Activated B cell treated with CpG ODN at 0.5 μM for 24 hours (primary cell): ENCODE measurements at regions of chr5 and their contacts with region 1.

Region 1: DNA sequence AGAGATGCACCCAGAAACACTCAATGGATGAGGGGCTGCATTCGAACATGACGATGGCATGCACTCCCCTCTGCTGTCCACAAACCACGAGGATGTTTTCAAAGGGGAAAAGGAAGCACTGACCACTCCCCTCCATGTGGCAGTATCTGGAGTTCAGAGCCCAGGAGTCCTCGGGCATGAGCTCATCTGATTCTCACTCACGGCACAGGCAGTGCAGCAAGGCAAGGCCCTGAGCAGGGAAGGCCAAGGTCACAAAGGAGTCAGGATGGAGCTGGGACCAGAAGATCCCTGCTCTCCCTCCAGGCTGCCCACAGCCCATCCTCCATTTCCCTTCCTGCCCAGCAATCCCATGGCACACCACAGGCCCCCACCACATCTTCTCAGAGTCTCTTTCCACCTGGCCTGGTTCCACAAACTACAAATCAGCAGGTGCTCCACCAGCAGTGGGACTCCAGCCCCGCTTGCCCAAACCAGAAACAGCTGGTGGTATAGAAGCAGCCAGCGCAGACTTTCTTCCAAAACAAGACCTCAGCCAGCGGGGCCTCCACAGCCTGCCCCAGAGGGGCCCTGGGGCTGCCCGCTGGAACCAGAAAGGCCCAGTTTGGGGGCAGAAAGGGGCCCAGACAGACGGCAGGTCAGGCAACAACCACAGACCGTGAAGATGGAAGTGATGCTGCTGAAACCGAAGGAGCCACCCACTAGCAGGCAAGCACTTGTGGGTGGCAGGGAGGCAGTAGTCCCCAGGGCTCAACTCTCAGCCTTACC is 12.2 kb downstream of the TNIP1 start:
- DNase-seq: peak; percentile 62
- ATAC-seq: peak; percentile 86
- H3K4me3 Mint-ChIP-seq: peak overlapping the region; percentile 72
- H3K27ac Mint-ChIP-seq: peak overlapping the region; percentile 91
- H3K4me1 Mint-ChIP-seq: peaks cover 99% of the 10 kb centered on the region
- H3K27me3 Mint-ChIP-seq: no peaks in the 10 kb centered on the region
- CTCF ChIP-seq: no peak

Region 2: GRCh38 chr5:150778517-150779396 is 289.9 kb before region 1 on chr5 and contains the start of gene SMIM3:
- CTCF ChIA-PET with region 1: no interaction called
- POLR2A ChIA-PET with region 1: no interaction called
- intact Hi-C with region 1: no loop called
- DNase-seq: no peak
- ATAC-seq: peak; percentile 27
- H3K4me3 Mint-ChIP-seq: peak within 1 kb of the TSS; percentile 79
- H3K27ac Mint-ChIP-seq: no peak within 1 kb of the TSS
- H3K4me1 Mint-ChIP-seq: peaks cover 33% of the 10 kb centered on the region
- H3K27me3 Mint-ChIP-seq: peaks cover 43% of the 10 kb centered on the region
- CTCF ChIP-seq: no peak
- total RNA-seq, gene SMIM3: 0.22 TPM in 1 of 2 replicates, not detected in the other

Region 3: GRCh38 chr5:151080623-151081430 is 12.2 kb after region 1 on chr5 and contains the start of gene TNIP1:
- CTCF ChIA-PET with region 1: interaction called, 5 read pairs
- POLR2A ChIA-PET with region 1: interaction called, 242 read pairs
- intact Hi-C with region 1: loop called (anchors 1 kb)
- DNase-seq: peak; percentile 99
- ATAC-seq: peak; percentile 81
- H3K4me3 Mint-ChIP-seq: peak within 1 kb of the TSS; percentile 93
- H3K27ac Mint-ChIP-seq: peak within 1 kb of the TSS; percentile 94
- H3K4me1 Mint-ChIP-seq: peaks cover 88% of the 10 kb centered on the region
- H3K27me3 Mint-ChIP-seq: no peaks in the 10 kb centered on the region
- CTCF ChIP-seq: no peak
- total RNA-seq, gene TNIP1: 506 and 512 TPM in 2 replicates